ENCODE measurements at regions of chr9 and their contacts with region 1.

Region 1: DNA sequence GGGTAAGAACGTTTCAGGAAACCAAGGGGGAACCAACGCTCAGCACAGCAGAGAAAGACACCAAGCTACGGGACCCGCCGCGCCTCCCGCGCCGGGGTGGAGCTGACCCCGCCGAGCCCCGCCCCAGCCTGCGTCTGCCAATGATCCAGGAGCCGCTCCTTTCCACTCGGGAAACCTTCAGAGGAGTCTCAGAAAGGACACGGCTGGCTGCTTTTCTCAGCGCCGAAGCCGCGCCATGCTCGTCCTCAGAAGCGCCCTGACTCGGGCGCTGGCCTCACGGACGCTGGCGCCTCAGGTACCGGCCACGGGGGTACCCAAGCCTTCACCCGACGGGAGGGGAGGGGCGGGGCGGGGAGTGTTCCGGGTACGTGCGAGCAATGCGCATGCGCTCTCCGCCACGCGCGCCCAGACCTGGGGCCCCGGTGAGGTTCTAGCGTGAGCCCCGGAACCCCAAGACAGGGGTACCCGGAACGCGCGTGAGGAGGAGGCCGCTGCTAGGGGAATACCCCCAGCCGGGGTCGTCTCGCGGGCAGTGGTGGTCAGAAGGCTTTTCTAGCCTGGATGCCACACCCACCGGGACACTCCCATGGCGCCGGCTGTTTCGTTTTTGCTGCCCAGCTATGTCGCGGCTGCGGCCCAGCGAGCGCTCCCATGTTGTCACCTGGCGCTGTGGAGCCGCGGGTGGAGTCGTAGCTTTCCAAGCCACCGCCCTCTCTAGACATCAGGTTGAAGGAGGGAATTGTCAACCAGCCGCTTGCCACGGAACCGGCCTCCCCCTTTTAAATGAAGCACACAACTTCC is at the start of gene NIPSNAP3A:
- DNase-seq: peak; percentile 63
- ATAC-seq: peak; percentile 91
- H3K4me3 ChIP-seq: peak within 1 kb of the TSS; percentile 86
- H3K27ac ChIP-seq: peak within 1 kb of the TSS; percentile 82
- H3K4me1 ChIP-seq: peaks cover 12% of the 10 kb centered on the region; the same call in 1 of the 2 replicates
- H3K27me3 ChIP-seq: no peaks in the 10 kb centered on the region
- CTCF ChIP-seq: no peak
- EP300 ChIP-seq: no peak
- POLR2A ChIP-seq: peak; percentile 84
- RAD21 ChIP-seq: no peak
- polyA plus RNA-seq, gene NIPSNAP3A: 60.9 to 87.2 TPM

Region 2: GRCh38 chr9:103789686-103790085 is 958.1 kb before region 1 on chr9:
- CTCF ChIA-PET with region 1: interaction called, 3 read pairs
- POLR2A ChIA-PET with region 1: no interaction called
- RAD21 ChIA-PET with region 1: no interaction called
- SMC1A ChIA-PET with region 1: interaction called, 6 read pairs
- in situ Hi-C with region 1: no loop called
- intact Hi-C with region 1: loop called (anchors 1 kb)
- DNase-seq: no peak
- ATAC-seq: peak; percentile 87
- H3K4me3 ChIP-seq: no peak overlapping the region
- H3K27ac ChIP-seq: no peak overlapping the region
- H3K4me1 ChIP-seq: no peaks in the 10 kb centered on the region
- H3K27me3 ChIP-seq: no peaks in the 10 kb centered on the region
- CTCF ChIP-seq: peak; percentile 44 to 49 (median 44); a peak in 5 of 6 replicates
- EP300 ChIP-seq: no peak
- POLR2A ChIP-seq: no peak
- RAD21 ChIP-seq: peak; percentile 76

Region 3: GRCh38 chr9:104177003-104177611 is 570.7 kb before region 1 on chr9:
- CTCF ChIA-PET with region 1: interaction called, 9 read pairs
- POLR2A ChIA-PET with region 1: no interaction called
- RAD21 ChIA-PET with region 1: interaction called, 4 read pairs
- SMC1A ChIA-PET with region 1: interaction called, 9 read pairs
- in situ Hi-C with region 1: no loop called
- intact Hi-C with region 1: loop called (anchors 2 kb)
- DNase-seq: no peak
- ATAC-seq: peak; percentile 87
- H3K4me3 ChIP-seq: no peak overlapping the region
- H3K27ac ChIP-seq: no peak overlapping the region
- H3K4me1 ChIP-seq: 0 out of 2 replicates have a peak, but pooled peaks cover 2% of the 10 kb centered on the region
- H3K27me3 ChIP-seq: no peaks in the 10 kb centered on the region
- CTCF ChIP-seq: peak; percentile 36 to 51 (median 41); a peak in 4 of 6 replicates
- EP300 ChIP-seq: no peak
- POLR2A ChIP-seq: no peak
- RAD21 ChIP-seq: peak; percentile 51

Region 4: DNA sequence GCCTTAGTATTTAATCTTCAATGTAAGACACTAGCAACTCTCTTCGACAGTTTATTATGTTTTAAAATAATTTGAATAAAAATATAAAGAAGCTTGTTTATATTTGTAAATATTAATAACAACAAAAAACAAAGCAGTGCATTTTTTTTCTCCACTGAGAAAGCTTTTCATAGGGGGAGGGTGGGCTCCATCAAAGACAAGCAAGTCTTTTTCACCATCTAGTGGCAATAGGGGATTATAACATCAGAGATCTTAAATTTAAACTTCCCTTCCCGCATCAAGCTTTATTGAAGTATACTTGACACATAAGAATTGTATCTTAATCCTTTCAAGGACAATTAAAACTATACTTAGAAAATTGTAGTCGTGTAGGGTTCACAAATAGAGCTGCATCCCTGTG is 252.9 kb before region 1 on chr9:
- CTCF ChIA-PET with region 1: interaction called, 5 read pairs
- POLR2A ChIA-PET with region 1: no interaction called
- RAD21 ChIA-PET with region 1: interaction called, 3 read pairs
- SMC1A ChIA-PET with region 1: interaction called, 7 read pairs
- in situ Hi-C with region 1: no loop called
- intact Hi-C with region 1: loop called (anchors 1 kb)
- DNase-seq: no peak
- ATAC-seq: peak; percentile 45; the same call in 2 of the 3 replicates
- H3K4me3 ChIP-seq: no peak overlapping the region
- H3K27ac ChIP-seq: no peak overlapping the region
- H3K4me1 ChIP-seq: no peaks in the 10 kb centered on the region
- H3K27me3 ChIP-seq: no peaks in the 10 kb centered on the region; a peak in 1 of 4 replicates
- CTCF ChIP-seq: peak; percentile 5 to 31 (median 6); a peak in 1 of 6 replicates
- EP300 ChIP-seq: no peak
- POLR2A ChIP-seq: no peak
- RAD21 ChIP-seq: peak; percentile 46

Region 5: DNA sequence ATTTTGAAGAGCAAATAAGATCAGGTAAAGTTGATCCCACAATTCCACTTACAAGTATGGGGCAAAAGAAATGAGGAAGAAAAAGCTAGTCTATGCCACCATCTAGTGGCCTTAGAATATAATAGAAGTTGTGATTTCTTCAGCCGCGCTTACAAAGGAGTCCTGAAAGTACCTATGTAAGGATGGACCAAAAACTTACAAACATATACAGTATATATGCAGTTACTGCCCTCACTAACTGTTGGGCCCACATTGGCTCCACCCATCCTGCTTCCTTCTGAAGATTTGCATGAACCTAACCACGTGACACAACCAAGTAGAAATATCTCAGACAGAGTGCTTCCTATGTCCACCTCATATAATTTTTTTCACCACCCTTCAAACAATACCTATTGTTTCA is 65.1 kb before region 1 on chr9:
- CTCF ChIA-PET with region 1: interaction called, 5 read pairs
- POLR2A ChIA-PET with region 1: no interaction called
- RAD21 ChIA-PET with region 1: interaction called, 3 read pairs
- SMC1A ChIA-PET with region 1: interaction called, 7 read pairs
- in situ Hi-C with region 1: no loop called
- intact Hi-C with region 1: loop called (anchors 1 kb)
- DNase-seq: peak; percentile 7
- ATAC-seq: peak; percentile 88
- H3K4me3 ChIP-seq: no peak overlapping the region
- H3K27ac ChIP-seq: no peak overlapping the region
- H3K4me1 ChIP-seq: no peaks in the 10 kb centered on the region
- H3K27me3 ChIP-seq: no peaks in the 10 kb centered on the region
- CTCF ChIP-seq: peak; percentile 24 to 74 (median 37); a peak in 4 of 6 replicates
- EP300 ChIP-seq: no peak
- POLR2A ChIP-seq: no peak
- RAD21 ChIP-seq: peak; percentile 74

Region 6: DNA sequence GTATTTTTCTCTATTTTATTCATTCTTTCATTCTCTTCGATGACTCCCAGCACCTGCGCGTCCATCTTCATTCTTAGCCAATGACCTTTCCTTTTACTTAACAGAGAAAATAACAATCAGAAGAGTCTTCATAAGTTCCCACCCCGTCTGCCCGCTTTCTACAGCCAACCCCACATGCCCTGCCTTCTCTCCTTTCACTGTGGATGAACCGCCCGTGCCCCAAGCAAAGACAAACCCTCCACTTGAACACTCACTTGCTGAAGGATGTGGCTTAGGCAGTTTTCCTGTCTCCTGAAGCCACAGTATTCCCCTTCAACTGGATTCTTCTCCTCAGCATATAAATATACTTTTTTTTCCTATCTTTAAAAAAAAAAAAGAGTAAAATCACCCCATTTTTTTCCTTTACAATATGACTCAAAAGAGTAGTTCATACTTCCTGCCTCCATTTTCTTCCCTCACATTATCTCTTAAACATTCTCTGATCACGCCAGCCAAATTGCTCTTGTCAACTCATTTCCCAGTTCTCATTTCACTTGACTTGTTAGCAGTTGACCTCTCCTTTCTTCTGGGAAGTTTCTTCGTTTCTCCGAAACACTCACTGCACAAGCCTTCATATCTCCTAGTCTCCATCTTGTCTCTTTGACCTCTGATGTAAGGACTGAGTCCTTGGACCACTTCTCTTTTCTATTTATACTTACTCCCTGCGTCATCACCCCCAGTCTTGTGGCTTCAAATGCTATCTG is 27.2 kb after region 1 on chr9:
- CTCF ChIA-PET with region 1: interaction called, 15 read pairs
- POLR2A ChIA-PET with region 1: interaction called, 13 read pairs
- RAD21 ChIA-PET with region 1: interaction called, 30 read pairs
- SMC1A ChIA-PET with region 1: interaction called, 31 read pairs
- in situ Hi-C with region 1: no loop called
- intact Hi-C with region 1: loop called (anchors 2 kb)
- DNase-seq: peak; percentile 85
- ATAC-seq: peak; percentile 84
- H3K4me3 ChIP-seq: peak overlapping the region; percentile 63
- H3K27ac ChIP-seq: peak overlapping the region; percentile 98
- H3K4me1 ChIP-seq: peaks cover 17% of the 10 kb centered on the region
- H3K27me3 ChIP-seq: no peaks in the 10 kb centered on the region
- CTCF ChIP-seq: no peak
- EP300 ChIP-seq: peak; percentile 13 to 57; a peak in 2 of 4 replicates
- POLR2A ChIP-seq: peak; percentile 73
- RAD21 ChIP-seq: no peak

Region 7: GRCh38 chr9:104868687-104869404 is 121.1 kb after region 1 on chr9:
- CTCF ChIA-PET with region 1: no interaction called
- POLR2A ChIA-PET with region 1: no interaction called
- RAD21 ChIA-PET with region 1: no interaction called
- SMC1A ChIA-PET with region 1: no interaction called
- in situ Hi-C with region 1: no loop called
- intact Hi-C with region 1: no loop called
- DNase-seq: no peak
- ATAC-seq: peak; percentile 92
- H3K4me3 ChIP-seq: no peak overlapping the region
- H3K27ac ChIP-seq: no peak overlapping the region
- H3K4me1 ChIP-seq: peaks cover 6% of the 10 kb centered on the region
- H3K27me3 ChIP-seq: no peaks in the 10 kb centered on the region
- CTCF ChIP-seq: no peak
- EP300 ChIP-seq: no peak
- POLR2A ChIP-seq: no peak
- RAD21 ChIP-seq: no peak